PC-3 (cell line): ENCODE measurements at regions of chr1 and their contacts with region 1.

Region 1: DNA sequence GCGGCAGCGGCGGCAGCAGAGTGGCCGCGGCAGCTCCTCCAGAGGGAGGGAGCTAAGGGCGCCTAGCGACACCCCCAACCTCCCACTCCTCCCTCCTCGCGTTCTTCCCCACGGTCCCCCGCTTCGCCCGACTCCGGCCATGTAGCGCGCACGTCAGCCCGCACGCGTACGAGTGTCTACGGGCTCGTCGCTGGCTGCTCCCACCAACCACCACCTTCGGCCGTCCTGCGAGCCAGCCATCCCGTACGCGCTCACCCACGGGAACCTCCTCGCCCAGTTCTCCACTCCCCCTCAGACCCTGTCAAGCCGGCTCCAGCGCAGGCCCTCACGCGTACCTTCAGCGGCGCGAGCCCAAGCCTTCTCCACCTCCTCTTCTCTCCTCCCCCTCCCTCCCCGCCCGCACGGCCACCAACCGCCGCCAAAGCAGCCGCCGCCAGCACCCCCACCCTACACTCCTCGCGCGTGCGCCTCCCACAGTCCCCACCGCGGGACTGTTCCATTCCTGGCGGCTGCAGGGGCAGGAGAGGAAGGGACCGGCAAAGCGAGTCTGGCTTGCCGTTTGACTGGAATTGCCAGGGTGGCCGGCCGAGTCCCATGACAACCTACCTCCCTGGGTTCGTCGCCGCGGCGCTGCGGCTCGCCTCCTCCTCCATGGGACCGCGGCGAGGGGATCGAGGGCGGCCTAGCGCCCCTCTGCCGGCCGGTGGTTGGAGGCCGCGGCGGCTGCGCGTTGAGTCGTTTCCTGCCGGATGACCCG is at the start of gene YY1AP1:
- DNase-seq: peak; percentile 91
- ATAC-seq: peak; percentile 79
- H3K4me3 ChIP-seq: peak within 1 kb of the TSS; percentile 93
- H3K27ac ChIP-seq: peak within 1 kb of the TSS; percentile 90
- H3K4me1 ChIP-seq: peaks cover 13% of the 10 kb centered on the region
- H3K27me3 ChIP-seq: no peaks in the 10 kb centered on the region
- CTCF ChIP-seq: no peak
- total RNA-seq, gene YY1AP1: 37.6 TPM in 2 replicates

Region 2: GRCh38 chr1:155648551-155649147 is 39.9 kb before region 1 on chr1:
- CTCF ChIA-PET with region 1: no interaction called
- POLR2A ChIA-PET with region 1: interaction called, 26 read pairs
- intact Hi-C with region 1: no loop called
- DNase-seq: peak; percentile 93
- ATAC-seq: peak; percentile 78
- H3K4me3 ChIP-seq: peak overlapping the region; percentile 62
- H3K27ac ChIP-seq: peak overlapping the region; percentile 77
- H3K4me1 ChIP-seq: peaks cover 33% of the 10 kb centered on the region
- H3K27me3 ChIP-seq: no peaks in the 10 kb centered on the region
- CTCF ChIP-seq: peak; percentile 80